Endothelial cell of umbilical vein (primary cell): ENCODE measurements at regions of chr4 and their contacts with region 1.

Region 1: DNA sequence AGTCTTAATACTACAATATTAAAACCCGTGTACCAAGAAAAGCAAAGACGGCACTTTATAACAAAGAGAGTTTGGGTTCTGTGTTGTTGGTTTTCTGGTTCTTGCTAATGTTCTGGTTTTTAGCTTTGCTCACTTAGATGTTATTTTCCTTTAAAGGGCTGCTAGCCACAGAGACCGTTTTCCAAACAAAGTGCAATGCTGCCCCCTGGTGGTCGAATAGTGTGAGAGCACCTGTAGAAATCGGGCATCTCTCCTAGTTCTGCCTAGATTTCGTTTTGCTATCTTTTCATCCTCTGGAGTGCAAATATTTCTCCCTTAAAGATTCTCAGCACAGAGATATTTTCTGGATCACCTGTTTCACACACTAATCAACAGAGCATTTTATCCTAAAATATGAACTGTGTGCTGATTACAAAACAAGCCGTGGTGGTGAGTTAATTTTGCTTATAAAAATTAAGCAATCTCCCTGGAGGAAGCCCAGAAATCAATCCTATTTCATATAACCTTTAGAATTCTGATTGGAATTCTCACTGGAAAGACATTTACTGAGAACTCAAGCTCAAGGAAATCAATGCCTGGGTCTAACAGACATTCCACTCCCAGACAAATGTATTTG is 334.5 kb upstream of the NOCT start:
- DNase-seq: peak; percentile 58
- H3K4me3 ChIP-seq: no peak overlapping the region
- H3K27ac ChIP-seq: no peak overlapping the region
- H3K4me1 ChIP-seq: no peaks in the 10 kb centered on the region
- H3K27me3 ChIP-seq: peaks cover 24 to 48% of the 10 kb centered on the region in 2 experiments
- CTCF ChIP-seq: peak; percentile 72 to 76
- POLR2A ChIP-seq: no peak

Region 2: DNA sequence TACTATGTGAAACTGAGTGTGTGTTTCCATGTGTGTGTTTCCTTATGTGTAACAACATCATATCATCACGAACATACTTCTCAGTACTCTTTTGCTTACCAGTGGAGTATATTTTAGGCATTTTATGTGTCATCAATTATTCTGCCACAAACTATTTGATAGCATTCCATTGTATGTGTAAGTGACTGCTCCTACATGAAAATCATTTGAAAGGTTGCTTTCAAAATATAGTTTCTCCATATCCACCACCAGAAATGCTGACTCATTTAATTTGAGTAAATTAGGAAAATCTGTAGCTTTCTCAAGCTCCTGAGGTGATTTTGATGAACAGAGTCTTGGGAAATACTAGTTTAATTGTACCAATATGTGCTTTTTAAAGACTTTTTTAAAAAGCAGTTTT is 1525.0 kb before region 1 on chr4:
- CTCF ChIA-PET with region 1: no interaction called
- POLR2A ChIA-PET with region 1: no interaction called
- dilution Hi-C with region 1: no loop called
- intact Hi-C with region 1: no loop called
- DNase-seq: no peak
- H3K4me3 ChIP-seq: no peak overlapping the region
- H3K27ac ChIP-seq: no peak overlapping the region
- H3K4me1 ChIP-seq: no peaks in the 10 kb centered on the region
- H3K27me3 ChIP-seq: no peaks in the 10 kb centered on the region
- CTCF ChIP-seq: no peak
- POLR2A ChIP-seq: no peak

Region 3: GRCh38 chr4:138576684-138577083 is 104.4 kb before region 1 on chr4:
- CTCF ChIA-PET with region 1: interaction called, 35 read pairs
- POLR2A ChIA-PET with region 1: no interaction called
- dilution Hi-C with region 1: no loop called
- intact Hi-C with region 1: loop called (anchors 1 kb)
- DNase-seq: peak; percentile 57
- H3K4me3 ChIP-seq: no peak overlapping the region
- H3K27ac ChIP-seq: no peak overlapping the region
- H3K4me1 ChIP-seq: no peaks in the 10 kb centered on the region
- H3K27me3 ChIP-seq: peaks cover under 1 to 3% of the 10 kb centered on the region in 2 experiments
- CTCF ChIP-seq: peak; percentile 31 to 53
- POLR2A ChIP-seq: no peak

Region 4: GRCh38 chr4:138749303-138749702 is 68.2 kb after region 1 on chr4:
- CTCF ChIA-PET with region 1: no interaction called
- POLR2A ChIA-PET with region 1: no interaction called
- dilution Hi-C with region 1: no loop called
- intact Hi-C with region 1: no loop called
- DNase-seq: no peak
- H3K4me3 ChIP-seq: no peak overlapping the region
- H3K27ac ChIP-seq: no peak overlapping the region
- H3K4me1 ChIP-seq: no peaks in the 10 kb centered on the region
- H3K27me3 ChIP-seq: peaks cover 5 to 10% of the 10 kb centered on the region in 2 experiments
- CTCF ChIP-seq: no peak
- POLR2A ChIP-seq: no peak

Region 5: DNA sequence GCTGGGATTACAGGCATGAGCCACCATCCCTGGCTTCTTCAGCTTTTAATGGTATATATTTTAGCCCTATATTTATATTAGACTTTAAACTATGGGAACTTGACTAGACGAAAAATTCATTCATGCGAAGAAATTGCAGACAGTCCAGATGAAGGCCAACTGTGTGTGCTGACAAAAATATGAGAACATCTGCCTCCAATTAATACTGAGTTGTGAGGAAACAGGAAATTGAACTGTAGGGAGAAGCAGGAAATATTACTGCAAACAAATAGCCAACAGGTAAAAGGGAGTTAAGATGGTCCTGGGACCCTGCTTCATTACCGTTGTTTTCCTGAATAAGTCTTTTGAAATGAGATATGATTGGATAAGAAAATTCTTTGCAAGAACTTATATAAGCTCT is 572.6 kb after region 1 on chr4:
- CTCF ChIA-PET with region 1: no interaction called
- POLR2A ChIA-PET with region 1: no interaction called
- dilution Hi-C with region 1: no loop called
- intact Hi-C with region 1: no loop called
- DNase-seq: no peak
- H3K4me3 ChIP-seq: no peak overlapping the region
- H3K27ac ChIP-seq: no peak overlapping the region
- H3K4me1 ChIP-seq: no peaks in the 10 kb centered on the region
- H3K27me3 ChIP-seq: no peaks in the 10 kb centered on the region
- CTCF ChIP-seq: no peak
- POLR2A ChIP-seq: no peak